A549 (cell line): ENCODE measurements at regions of chr14 and their contacts with region 1.

Region 1: DNA sequence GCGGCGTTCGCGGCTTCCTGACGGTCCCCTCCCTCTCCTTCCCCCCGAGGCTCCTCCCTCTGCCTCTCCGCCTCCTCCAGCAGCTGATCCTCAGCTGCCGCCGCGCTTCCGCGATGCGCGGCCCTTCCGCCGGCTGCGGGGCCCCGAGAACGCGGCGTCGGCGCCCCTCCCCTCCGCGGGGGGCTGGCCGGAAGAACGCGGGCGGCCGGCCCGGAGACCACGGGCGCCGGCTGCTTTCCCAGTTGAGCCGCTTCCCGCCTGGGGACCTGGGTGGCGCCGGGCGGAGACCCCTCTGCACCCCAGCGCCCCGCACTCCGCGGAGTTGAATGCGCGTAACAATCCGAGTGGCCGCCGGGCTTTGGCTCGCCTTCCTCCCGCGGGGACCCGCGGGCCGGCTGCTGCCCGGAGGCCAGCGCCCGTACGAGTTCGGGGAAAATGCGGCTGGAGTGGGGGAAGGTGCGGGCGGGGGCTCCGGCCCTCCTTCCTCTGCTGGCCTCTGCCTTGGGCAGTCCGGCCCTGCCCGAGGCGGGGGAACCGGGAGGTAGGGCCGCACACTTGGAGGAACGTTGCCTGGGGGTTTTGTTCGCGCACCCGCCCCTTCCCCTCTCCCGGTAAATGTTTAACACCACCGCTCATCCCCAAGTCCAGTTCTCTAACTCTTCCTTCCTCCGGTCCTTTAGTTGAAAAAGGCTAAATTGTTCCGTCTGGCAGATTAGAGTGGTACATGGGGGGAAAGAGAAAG is 383 bp upstream of the DCAF5 start:
- DNase-seq: peak; percentile 93 to 97
- ATAC-seq: peak; percentile 87 to 88
- H3K4me3 ChIP-seq: peak overlapping the region; percentile 91
- H3K27ac ChIP-seq: peak overlapping the region; percentile 93 to 96
- H3K4me1 ChIP-seq: peaks cover 27% of the 10 kb centered on the region
- CTCF ChIP-seq: no peak
- EP300 ChIP-seq: no peak
- POLR2A ChIP-seq: peak; percentile 71
- RAD21 ChIP-seq: no peak

Region 2: DNA sequence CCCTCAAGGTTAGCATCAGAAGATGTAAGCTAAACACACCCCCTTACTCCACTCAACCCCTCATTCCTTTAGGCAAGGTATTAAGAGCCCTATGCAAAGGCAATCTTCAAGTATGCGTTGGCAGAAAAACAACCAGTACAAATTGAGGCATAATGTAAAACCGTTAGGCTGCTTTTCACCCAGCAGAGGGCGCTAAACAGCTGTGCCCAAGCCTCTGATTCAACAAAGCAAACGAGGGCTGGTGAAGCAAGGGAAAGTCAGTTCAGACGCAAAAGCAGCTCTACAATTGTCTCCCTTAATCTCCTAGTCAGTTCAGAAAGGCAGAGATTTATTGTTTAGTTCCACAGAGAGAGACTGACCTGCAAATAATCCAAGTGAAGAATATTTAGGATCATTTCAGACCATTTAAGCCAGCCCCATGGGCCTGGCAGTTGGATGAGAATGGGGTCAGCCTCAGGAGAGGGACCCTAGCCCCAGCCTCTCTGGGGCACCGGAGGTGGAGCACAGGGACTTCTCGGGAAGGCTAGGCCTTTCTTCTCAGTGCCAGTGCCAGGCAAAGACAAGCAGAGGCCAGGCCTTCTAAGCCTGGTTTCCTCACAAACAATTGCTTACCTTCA is 23.9 kb before region 1 on chr14:
- CTCF ChIA-PET with region 1: interaction called, 32 read pairs
- POLR2A ChIA-PET with region 1: interaction called, 4 read pairs
- DNase-seq: peak; percentile 79 to 83
- ATAC-seq: peak; percentile 91 to 95
- H3K4me3 ChIP-seq: no peak overlapping the region
- H3K27ac ChIP-seq: peak overlapping the region; percentile 52 to 72; a peak in 4 of 6 replicates
- H3K4me1 ChIP-seq: peaks cover 34% of the 10 kb centered on the region
- CTCF ChIP-seq: peak; percentile 95
- EP300 ChIP-seq: no peak
- POLR2A ChIP-seq: no peak
- RAD21 ChIP-seq: peak; percentile 79 to 88

Region 3: DNA sequence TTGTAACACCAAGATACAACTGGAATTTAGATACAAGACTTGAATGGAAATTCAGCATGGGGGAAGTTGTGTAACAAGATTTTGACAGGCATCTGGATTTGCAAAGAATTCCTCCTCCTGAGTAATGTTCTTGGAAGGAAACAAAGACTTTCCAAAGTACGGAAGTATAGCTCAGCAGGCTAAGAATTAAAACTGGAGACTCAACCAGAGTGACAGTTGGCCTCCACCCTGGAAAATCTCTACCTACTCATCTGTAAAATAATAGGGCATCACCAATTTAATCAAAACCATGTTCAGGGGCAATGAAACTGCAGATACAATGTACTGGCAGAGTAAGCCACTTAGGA is 15.1 kb before region 1 on chr14:
- CTCF ChIA-PET with region 1: interaction called, 25 read pairs
- POLR2A ChIA-PET with region 1: interaction called, 3 read pairs
- DNase-seq: no peak
- ATAC-seq: no peak
- H3K4me3 ChIP-seq: no peak overlapping the region
- H3K27ac ChIP-seq: no peak overlapping the region
- H3K4me1 ChIP-seq: peaks cover 15% of the 10 kb centered on the region
- CTCF ChIP-seq: no peak
- EP300 ChIP-seq: no peak
- POLR2A ChIP-seq: no peak
- RAD21 ChIP-seq: no peak

Region 4: DNA sequence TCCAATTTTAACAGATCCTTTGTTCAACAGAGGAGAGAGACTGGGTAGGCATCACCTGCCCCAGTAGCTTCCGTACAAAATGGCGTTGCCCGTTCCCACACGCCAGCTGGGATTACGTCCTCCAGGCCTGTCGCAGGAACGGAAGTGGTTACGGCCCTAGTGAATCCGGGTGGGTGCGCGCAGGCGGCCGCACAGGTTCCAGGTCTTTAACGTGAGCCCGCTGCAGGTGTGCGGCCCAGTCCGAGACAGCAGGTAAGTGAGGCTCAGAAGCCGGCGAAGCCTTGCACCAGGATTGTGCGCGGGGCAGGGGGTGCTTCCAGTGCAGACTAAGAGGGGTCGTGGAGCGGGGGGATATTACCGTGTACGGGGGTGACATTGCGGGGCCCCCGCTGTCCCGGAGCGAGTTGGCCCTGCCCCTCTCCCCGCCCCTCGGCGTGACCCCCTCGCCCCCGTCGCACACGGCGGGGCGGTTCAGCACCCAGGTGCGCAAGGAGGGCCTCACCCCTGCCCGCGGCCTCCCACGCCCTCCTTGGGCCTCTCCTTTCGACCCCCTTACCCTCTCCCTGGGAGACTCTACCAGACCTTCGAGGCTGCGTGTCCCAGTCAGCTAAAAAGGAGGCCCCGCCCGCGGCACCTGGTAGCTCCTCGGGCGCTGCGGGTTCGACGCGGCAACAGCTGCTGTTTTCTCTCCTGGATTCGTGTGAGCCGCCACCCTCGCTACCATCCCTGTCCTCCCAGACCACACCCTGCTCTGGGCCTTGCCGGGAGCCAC is 38.2 kb after region 1 on chr14 and contains the start of gene EXD2:
- CTCF ChIA-PET with region 1: interaction called, 12 read pairs
- POLR2A ChIA-PET with region 1: interaction called, 14 read pairs
- DNase-seq: peak; percentile 94 to 97
- ATAC-seq: peak; percentile 99
- H3K4me3 ChIP-seq: peak within 1 kb of the TSS; percentile 70
- H3K27ac ChIP-seq: peak within 1 kb of the TSS; percentile 87 to 94
- H3K4me1 ChIP-seq: peaks cover 6% of the 10 kb centered on the region; the same call in 2 of the 3 replicates
- CTCF ChIP-seq: no peak
- EP300 ChIP-seq: no peak
- POLR2A ChIP-seq: peak; percentile 22
- RAD21 ChIP-seq: no peak; a peak in 1 of 5 replicates
- polyA plus RNA-seq, gene EXD2: 22.1 and 22.3 TPM in 2 replicates

Region 5: GRCh38 chr14:69315301-69315700 is 162.0 kb after region 1 on chr14:
- CTCF ChIA-PET with region 1: no interaction called
- POLR2A ChIA-PET with region 1: no interaction called
- DNase-seq: peak in 1 of 2 experiments; percentile 27
- ATAC-seq: no peak
- H3K4me3 ChIP-seq: no peak overlapping the region
- H3K27ac ChIP-seq: no peak overlapping the region
- H3K4me1 ChIP-seq: peaks cover 40% of the 10 kb centered on the region
- CTCF ChIP-seq: no peak
- EP300 ChIP-seq: no peak
- POLR2A ChIP-seq: no peak
- RAD21 ChIP-seq: no peak